ENCODE measurements at regions of chr5 and their contacts with region 1.

Region 1: GRCh38 chr5:148730943-148731861 is 76.9 kb upstream of the HTR4 start:
- DNase-seq: peak; percentile 34 to 54
- H3K4me3 ChIP-seq: no peak overlapping the region
- H3K27ac ChIP-seq: no peak overlapping the region
- H3K4me1 ChIP-seq: no peaks in the 10 kb centered on the region
- H3K27me3 ChIP-seq: no peaks in the 10 kb centered on the region
- CTCF ChIP-seq: peak in 2 of 3 experiments; percentile 92 to 98; a peak in 3 of 4 replicates
- EP300 ChIP-seq: no peak
- POLR2A ChIP-seq: no peak
- RAD21 ChIP-seq: peak; percentile 94 to 95

Region 2: DNA sequence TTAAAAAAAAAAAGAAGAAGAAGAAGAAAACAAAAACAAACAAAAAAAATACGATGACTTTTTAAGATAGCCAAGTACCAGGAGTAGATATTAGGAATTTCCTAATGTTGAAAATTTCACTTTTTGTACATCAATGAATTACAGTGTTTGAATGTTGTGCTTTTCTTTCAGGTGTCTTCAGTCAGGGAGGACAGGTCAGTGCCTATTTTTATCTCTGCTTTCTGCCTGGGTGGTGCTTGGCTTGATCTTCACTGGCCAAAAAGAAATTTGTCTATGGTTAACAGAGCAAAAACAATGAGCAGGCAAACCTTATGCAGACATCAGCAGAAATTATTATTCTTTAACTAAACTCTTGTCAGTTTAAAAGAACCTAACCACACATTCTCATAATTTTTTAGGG is 525.3 kb before region 1 on chr5:
- CTCF ChIA-PET with region 1: no interaction called
- POLR2A ChIA-PET with region 1: no interaction called
- DNase-seq: no peak
- H3K4me3 ChIP-seq: no peak overlapping the region
- H3K27ac ChIP-seq: no peak overlapping the region
- H3K4me1 ChIP-seq: no peaks in the 10 kb centered on the region
- H3K27me3 ChIP-seq: no peaks in the 10 kb centered on the region
- CTCF ChIP-seq: no peak
- EP300 ChIP-seq: no peak
- POLR2A ChIP-seq: no peak
- RAD21 ChIP-seq: no peak

Region 3: GRCh38 chr5:148437249-148437648 is 294.0 kb before region 1 on chr5:
- CTCF ChIA-PET with region 1: interaction called, 231 read pairs
- POLR2A ChIA-PET with region 1: no interaction called
- DNase-seq: no peak
- H3K4me3 ChIP-seq: no peak overlapping the region
- H3K27ac ChIP-seq: no peak overlapping the region
- H3K4me1 ChIP-seq: no peaks in the 10 kb centered on the region
- H3K27me3 ChIP-seq: no peaks in the 10 kb centered on the region
- CTCF ChIP-seq: no peak
- EP300 ChIP-seq: no peak
- POLR2A ChIP-seq: no peak
- RAD21 ChIP-seq: no peak

Region 4: GRCh38 chr5:148482691-148483462 is 248.3 kb before region 1 on chr5:
- CTCF ChIA-PET with region 1: interaction called, 27 read pairs
- POLR2A ChIA-PET with region 1: no interaction called
- DNase-seq: peak; percentile 49 to 92
- H3K4me3 ChIP-seq: no peak overlapping the region
- H3K27ac ChIP-seq: no peak overlapping the region
- H3K4me1 ChIP-seq: no peaks in the 10 kb centered on the region
- H3K27me3 ChIP-seq: no peaks in the 10 kb centered on the region; a peak in 2 of 7 replicates
- CTCF ChIP-seq: peak; percentile 83 to 91 (median 84)
- EP300 ChIP-seq: no peak
- POLR2A ChIP-seq: no peak
- RAD21 ChIP-seq: peak; percentile 55 to 73

Region 5: DNA sequence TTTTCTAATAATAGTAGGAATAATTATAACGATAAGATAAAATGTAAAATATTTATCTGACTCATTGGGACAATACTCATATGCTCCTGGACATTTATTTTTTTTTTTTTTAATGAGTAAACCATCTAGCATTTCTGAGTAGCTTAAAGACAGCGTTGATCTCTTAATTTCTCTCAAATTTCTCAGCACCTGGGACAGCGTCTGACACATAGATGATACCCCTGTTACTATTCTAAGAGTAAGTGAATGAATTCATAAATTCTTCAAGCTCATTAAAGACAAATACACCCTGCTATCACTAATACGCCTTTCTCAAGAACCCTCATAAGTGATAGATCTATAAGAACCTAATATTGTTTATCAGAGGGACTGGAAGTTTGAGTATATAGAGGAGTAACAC is 64.8 kb before region 1 on chr5:
- CTCF ChIA-PET with region 1: no interaction called
- POLR2A ChIA-PET with region 1: no interaction called
- DNase-seq: no peak
- H3K4me3 ChIP-seq: no peak overlapping the region
- H3K27ac ChIP-seq: no peak overlapping the region
- H3K4me1 ChIP-seq: no peaks in the 10 kb centered on the region
- H3K27me3 ChIP-seq: no peaks in the 10 kb centered on the region; a peak in 1 of 7 replicates
- CTCF ChIP-seq: no peak
- EP300 ChIP-seq: no peak
- POLR2A ChIP-seq: no peak
- RAD21 ChIP-seq: no peak

Region 6: GRCh38 chr5:148713735-148714508 is 17.3 kb before region 1 on chr5:
- CTCF ChIA-PET with region 1: interaction called, 73 read pairs
- POLR2A ChIA-PET with region 1: interaction called, 3 read pairs
- DNase-seq: no peak
- H3K4me3 ChIP-seq: no peak overlapping the region
- H3K27ac ChIP-seq: no peak overlapping the region
- H3K4me1 ChIP-seq: no peaks in the 10 kb centered on the region
- H3K27me3 ChIP-seq: no peaks in the 10 kb centered on the region
- CTCF ChIP-seq: no peak
- EP300 ChIP-seq: no peak
- POLR2A ChIP-seq: no peak
- RAD21 ChIP-seq: no peak

Region 7: DNA sequence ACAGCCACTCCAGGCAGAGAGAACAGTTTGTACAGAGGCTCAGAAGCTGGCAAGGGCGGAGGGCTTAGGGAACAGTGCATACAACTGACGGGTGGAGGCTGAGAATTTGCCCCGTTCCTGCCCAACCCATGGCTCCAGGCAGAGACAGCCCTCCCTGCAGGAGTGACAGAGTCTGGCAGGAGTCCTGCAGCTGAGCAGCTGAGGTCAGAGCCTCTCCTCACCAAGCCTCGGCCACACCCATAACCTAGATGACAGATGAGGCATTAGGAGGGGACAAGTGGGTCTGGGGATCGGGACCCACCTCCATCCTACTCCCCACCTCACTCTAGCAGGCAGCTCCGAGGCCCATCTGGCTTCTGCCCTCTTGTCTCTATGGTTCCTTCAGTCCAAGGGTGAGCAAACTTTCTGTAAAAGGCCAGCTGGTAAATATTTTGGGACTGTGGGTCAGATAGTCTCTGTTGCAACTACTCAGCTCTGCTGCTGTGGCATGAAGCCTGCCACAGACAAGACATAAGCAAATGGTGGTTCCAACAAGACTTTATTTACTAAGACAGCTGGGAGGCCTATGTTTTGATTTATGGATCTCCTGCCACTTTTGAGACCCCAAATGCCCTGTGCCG is 248.0 kb after region 1 on chr5:
- CTCF ChIA-PET with region 1: interaction called, 433 read pairs
- POLR2A ChIA-PET with region 1: no interaction called
- DNase-seq: no peak
- H3K4me3 ChIP-seq: no peak overlapping the region
- H3K27ac ChIP-seq: no peak overlapping the region
- H3K4me1 ChIP-seq: peaks cover 0 to 13% (median 5%) of the 10 kb centered on the region in 4 experiments; a peak in 4 of 7 replicates
- H3K27me3 ChIP-seq: no peaks in the 10 kb centered on the region
- CTCF ChIP-seq: no peak
- EP300 ChIP-seq: no peak
- POLR2A ChIP-seq: no peak
- RAD21 ChIP-seq: no peak

Region 8: DNA sequence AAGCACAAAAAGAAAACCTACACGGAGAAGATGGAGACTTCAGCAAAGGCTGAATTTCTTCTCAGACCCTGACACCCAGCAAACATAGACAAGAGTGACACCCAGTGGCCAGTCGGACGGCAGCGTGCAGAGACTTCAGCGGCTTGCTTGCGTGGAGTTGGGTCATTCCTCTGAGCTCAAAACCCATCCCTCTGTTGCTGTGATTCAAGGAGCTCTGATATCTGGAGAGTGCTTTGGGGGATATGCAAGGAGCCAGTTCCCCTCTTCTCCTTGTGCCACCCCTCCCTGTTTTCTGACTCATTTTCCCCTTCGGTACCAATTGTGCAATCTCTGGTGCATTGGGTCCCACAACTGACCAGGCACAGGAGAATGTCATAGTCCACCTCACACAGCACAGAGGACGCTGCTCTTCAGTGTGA is 304.2 kb after region 1 on chr5:
- CTCF ChIA-PET with region 1: interaction called, 444 read pairs
- POLR2A ChIA-PET with region 1: no interaction called
- DNase-seq: peak; percentile 41 to 80
- H3K4me3 ChIP-seq: no peak overlapping the region
- H3K27ac ChIP-seq: no peak overlapping the region
- H3K4me1 ChIP-seq: no peaks in the 10 kb centered on the region
- H3K27me3 ChIP-seq: no peaks in the 10 kb centered on the region
- CTCF ChIP-seq: peak; percentile 92 to 94 (median 94)
- EP300 ChIP-seq: no peak
- POLR2A ChIP-seq: no peak
- RAD21 ChIP-seq: peak; percentile 96 to 97